Heart right ventricle (tissue), 16 donors: ENCODE measurements at regions of chr19 and their contacts with region 1.

Region 1: DNA sequence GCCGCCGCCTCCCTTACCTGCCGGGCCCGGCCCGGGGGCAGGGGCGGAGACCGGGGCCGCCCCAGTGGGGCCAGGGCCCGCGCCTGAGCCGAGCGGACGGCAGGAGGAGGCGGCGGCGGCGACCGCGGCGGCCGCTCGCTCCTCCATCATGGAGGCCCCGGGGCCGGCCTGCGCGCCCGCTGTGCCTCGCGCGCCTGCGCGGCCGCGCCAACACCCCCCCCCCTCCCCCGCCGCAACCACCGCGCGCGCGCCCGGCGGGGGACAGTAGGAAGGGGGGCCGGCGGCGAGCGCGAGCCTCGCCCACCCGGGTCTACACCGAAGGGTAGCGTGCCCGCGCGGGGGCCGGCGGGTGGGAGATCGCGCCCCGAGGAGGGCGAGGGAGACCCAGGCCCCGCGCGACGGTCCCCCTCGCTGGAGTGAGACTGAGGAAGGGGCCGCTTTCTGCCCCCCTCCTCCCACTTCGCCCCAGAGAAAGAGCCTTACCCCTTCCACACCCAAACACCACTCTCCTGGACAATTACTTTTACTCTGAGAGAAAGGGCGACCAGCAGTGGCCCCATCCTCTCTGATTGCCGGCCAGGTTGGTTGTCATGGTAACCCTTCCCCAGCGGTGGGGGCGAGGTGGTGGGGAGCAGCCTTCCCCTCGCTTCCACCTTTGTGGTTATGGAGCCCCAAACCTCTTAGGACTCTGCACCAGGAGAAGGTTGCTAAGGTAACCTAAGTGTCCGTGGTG is at the start of gene STRN4:
- DNase-seq: peak in 1 of 2 donors; percentile 63
- ATAC-seq: peak; percentile 34 to 85 (median 59)
- H3K4me3 ChIP-seq: peak within 1 kb of the TSS; percentile 79 to 99 (median 96)
- H3K27ac ChIP-seq: peak within 1 kb of the TSS; percentile 83 to 98 (median 94)
- H3K4me1 ChIP-seq: peaks cover under 1 to 53% (median 44%) of the 10 kb centered on the region in 9 donors
- H3K27me3 ChIP-seq: no peaks in the 10 kb centered on the region
- CTCF ChIP-seq: no peak
- total RNA-seq, gene STRN4: 43.3 to 56.1 (median 50.0) TPM

Region 2: GRCh38 chr19:46600384-46601317 is 145.8 kb before region 1 on chr19:
- intact Hi-C with region 1: loop called in 1 of 10 experiments (anchors 5 kb)
- DNase-seq: peak; percentile 97 to 98
- ATAC-seq: peak; percentile 90 to 95 (median 92)
- H3K4me3 ChIP-seq: peak overlapping the region; percentile 83 to 100 (median 100)
- H3K27ac ChIP-seq: peak overlapping the region; percentile 84 to 100 (median 99)
- H3K4me1 ChIP-seq: peaks cover 20 to 42% (median 40%) of the 10 kb centered on the region in 9 donors
- H3K27me3 ChIP-seq: no peaks in the 10 kb centered on the region
- CTCF ChIP-seq: no peak

Region 3: DNA sequence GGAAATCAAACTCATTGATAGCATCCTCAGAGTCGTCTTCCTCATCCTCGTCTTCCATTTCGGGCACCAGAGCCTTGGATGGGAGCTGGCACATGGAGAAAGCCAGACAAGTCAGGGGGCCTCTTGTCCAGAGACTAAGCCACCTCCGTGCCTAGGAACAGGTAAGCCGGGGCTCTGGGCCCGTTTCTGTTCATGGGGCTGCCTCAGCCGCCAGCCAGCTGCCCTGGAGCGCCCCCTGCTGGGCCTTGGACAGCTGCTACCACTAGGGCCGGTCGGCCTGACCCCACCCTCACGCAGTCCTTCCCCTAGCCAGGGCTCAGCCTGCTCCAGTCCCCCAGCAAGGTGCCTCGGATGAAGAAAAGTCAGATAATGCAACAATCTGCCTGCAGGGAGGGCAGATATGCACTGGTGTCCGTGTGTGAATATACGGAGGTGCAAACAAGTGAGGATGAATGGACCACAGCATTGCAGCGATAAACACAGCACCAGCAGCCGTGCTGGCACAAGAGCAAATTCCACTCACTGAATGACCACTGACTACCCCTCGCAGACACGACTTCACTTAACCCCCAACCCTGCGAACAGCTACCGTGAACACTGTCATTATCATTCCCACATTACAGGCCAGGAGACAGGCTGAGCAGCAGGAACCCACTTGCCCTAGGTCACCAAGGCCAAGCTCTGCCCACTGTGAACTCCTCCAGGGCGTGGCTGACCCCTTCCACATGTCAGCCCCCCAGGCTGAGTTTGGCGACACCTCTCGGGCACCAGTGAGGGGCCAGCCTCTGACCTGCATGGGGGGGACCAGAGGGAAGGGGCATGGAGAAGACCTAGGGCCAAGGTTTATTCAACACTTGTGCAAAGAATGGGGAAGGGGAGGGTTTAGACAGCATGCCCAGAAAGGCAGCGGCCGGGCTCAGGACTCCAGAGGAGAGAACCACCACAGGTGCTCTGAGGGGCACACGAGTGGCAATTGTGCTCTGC is 17.5 kb before region 1 on chr19:
- intact Hi-C with region 1: no loop called
- DNase-seq: peak; percentile 77 to 84
- ATAC-seq: peak; percentile 66 to 90 (median 81)
- H3K4me3 ChIP-seq: peak overlapping the region in 2 of 10 donors; percentile 12 to 38
- H3K27ac ChIP-seq: peak overlapping the region in 9 of 10 donors; percentile 23 to 84 (median 77)
- H3K4me1 ChIP-seq: peaks cover 9 to 64% (median 32%) of the 10 kb centered on the region in 9 donors
- H3K27me3 ChIP-seq: no peaks in the 10 kb centered on the region
- CTCF ChIP-seq: peak; percentile 87 to 98 (median 95)